ENCODE measurements at regions of chr15 and their contacts with region 1.

Region 1: DNA sequence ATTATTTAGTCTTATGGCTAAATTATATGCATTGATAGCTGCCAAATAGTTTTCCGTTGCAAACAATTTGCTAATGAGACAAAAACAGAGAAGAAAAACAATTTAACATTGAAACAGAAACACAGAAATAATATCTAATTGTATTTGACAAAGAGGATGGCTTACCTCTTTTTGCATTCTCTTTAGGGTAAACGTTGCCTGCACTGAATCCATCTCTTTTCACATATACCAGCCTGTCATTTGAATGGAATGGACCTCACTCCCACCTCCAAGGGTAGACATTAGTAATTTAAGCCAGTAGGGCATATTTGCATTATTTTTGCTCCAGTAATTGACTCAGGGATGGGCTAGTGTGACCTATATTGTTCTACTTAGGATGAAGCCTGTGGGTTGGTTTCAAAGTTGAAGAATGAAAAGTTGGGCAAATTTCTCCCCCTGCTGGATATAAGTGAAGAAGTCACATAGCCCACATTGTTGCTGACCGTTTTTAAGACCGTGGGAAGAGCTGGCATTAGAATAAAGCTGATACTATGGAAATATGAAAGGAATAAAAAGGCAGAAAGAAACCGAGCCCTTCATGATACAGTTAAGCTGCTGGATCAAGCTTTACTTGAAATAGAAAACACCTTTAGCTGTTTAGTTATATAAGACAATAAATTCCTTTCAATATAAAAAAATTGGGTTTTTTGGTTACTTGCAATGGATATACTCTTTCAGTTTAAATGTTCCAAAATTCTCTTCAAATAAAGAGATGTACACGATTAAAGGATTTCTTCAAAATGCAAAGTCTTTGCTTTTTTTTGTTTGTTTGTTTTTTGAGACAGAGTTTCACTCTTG is 26.9 kb downstream of the PIERCE2 start:
- DNase-seq: peak; percentile 56 to 71 (median 62)
- H3K4me3 ChIP-seq: no peak overlapping the region
- H3K27ac ChIP-seq: no peak overlapping the region
- H3K4me1 ChIP-seq: no peaks in the 10 kb centered on the region
- H3K27me3 ChIP-seq: no peaks in the 10 kb centered on the region

Region 2: DNA sequence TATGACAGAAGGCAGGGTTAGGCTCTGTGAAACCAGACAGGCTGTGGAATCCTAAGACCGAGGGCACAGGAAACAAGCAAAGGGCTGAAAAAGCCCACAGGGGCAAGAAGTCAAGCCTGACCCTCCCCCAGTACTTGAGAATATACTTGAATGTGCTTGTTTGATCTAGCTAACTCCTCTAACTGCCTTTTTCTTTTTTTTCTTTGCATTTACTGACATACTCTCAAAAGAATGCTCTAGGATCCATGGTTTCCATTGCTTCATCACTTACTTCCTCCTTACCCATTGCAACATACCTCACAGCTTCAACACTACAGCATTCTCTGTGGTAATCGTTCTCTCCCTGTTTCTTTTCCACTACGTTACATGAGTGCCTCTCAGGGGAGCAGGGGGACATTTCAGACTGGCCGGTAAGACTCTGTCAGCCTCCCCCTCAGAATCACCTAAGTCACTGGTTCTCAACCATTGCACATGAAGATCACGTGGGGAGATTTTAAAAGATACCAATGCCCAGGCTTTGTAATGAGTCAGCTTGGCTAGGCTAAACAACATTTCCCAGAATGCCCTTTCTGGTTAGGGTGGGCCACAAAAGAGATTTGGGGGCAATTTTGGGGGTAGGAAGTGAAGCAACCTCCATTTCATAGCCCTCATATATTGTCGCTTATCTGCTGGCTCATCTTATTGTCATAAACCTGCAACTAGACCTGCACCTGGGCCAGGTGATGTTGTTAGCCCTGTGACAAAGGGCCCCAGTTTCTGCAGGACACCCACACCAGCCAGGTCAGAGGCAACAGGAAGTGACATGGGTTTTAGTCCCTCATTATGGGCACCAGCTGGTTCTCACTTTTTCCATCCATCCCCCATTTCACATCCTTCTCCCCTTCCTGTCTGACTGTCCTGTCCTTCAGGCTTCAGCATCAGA is 213.9 kb before region 1 on chr15:
- CTCF ChIA-PET with region 1: interaction called, 17 read pairs
- POLR2A ChIA-PET with region 1: no interaction called
- DNase-seq: peak; percentile 51 to 81 (median 77)
- H3K4me3 ChIP-seq: peak overlapping the region in 2 of 7 experiments; percentile 37 to 46
- H3K27ac ChIP-seq: no peak overlapping the region
- H3K4me1 ChIP-seq: peaks cover 34 to 72% (median 42%) of the 10 kb centered on the region in 4 experiments
- H3K27me3 ChIP-seq: no peaks in the 10 kb centered on the region

Region 3: DNA sequence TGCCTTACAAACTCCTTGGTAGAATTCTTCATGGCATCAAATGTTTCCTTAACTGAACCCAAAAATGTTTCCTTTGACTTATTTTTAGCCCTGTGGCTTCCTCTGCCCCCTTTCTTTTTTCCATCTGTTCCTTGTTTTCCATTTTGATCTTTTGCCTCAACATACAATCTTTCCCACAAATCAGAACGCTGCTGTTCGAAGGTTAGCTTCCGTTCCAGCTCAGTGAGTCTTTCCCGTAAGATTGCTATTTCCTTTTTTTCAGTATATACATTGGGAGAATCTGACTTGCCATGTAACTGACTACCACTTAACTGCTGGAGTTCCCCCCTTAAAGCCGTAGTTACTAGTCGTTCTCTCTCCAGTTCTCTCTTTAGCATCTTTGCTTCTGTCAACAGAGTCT is 75.0 kb before region 1 on chr15:
- CTCF ChIA-PET with region 1: interaction called, 10 read pairs
- POLR2A ChIA-PET with region 1: no interaction called
- DNase-seq: peak in 2 of 3 donors; percentile 21 to 26
- H3K4me3 ChIP-seq: no peak overlapping the region
- H3K27ac ChIP-seq: no peak overlapping the region
- H3K4me1 ChIP-seq: peaks cover 3 to 10% (median 5%) of the 10 kb centered on the region in 4 experiments
- H3K27me3 ChIP-seq: no peaks in the 10 kb centered on the region

Region 4: DNA sequence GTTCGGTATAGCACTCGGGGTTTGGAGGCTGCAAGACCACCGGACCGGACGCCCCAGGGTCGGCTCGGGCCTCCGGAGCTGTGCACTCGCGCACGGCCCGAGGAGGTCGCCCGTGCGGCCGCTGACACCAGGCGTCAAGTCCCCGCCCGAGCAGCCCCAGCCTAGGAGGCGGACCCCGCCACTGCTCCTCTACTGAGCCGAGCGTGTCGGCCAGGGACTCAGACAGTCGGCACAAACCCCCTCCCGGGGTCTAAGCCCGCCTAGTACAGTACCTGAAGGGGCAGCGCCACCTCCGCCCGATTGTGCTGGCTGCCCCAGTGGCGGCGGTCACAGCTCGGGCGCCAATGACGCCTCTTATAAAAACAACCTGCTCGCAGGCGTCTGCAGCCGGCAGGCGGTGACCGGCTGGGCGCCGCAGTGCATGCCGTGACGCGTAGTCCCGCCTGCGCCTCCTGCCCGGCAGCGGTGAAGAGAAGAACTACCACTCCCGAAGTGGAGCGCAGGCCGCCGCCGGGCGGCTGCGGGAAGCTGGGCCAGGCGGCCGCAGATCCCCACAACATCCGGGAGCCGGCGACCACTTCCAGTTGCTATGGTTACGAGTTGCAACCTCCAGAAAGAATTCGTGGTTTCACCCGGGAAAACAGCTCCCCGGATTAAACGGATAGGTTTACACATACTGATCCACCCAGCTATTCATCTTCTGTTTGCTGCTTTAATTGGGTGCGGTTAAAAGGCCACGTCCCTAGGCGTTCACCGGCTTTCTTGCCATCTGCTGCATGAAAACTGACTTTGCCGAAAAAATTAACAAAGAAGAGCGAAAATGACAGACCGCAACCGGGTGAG is 27.0 kb before region 1 on chr15 and contains the starts of genes CCPG1 and PIERCE2:
- CTCF ChIA-PET with region 1: interaction called, 27 read pairs
- POLR2A ChIA-PET with region 1: interaction called, 3 read pairs
- DNase-seq: peak; percentile 95 to 97 (median 96)
- H3K4me3 ChIP-seq: peak within 1 kb of the TSS; percentile 76 to 95 (median 92)
- H3K27ac ChIP-seq: peak within 1 kb of the TSS; percentile 56 to 91
- H3K4me1 ChIP-seq: peaks cover 14 to 50% (median 33%) of the 10 kb centered on the region in 4 experiments
- H3K27me3 ChIP-seq: no peaks in the 10 kb centered on the region

Measured in common myeloid progenitor, CD34-positive (primary cell).